H1 (cell line): ENCODE measurements at regions of chr20 and their contacts with region 1.

Region 1: GRCh38 chr20:645318-646106 is 7.5 kb downstream of the SRXN1 start:
- DNase-seq: peak; percentile 82 to 96
- H3K4me3 ChIP-seq: no peak overlapping the region
- H3K27ac ChIP-seq: no peak overlapping the region
- H3K4me1 ChIP-seq: peaks cover 0 to 4% (median 1%) of the 10 kb centered on the region in 4 experiments; a peak in 2 of 7 replicates
- H3K27me3 ChIP-seq: no peaks in the 10 kb centered on the region
- CTCF ChIP-seq: peak; percentile 87 to 96 (median 96)
- EP300 ChIP-seq: peak in 1 of 2 experiments; percentile 50; a peak in 1 of 3 replicates
- POLR2A ChIP-seq: no peak
- RAD21 ChIP-seq: peak; percentile 94 to 95

Region 2: GRCh38 chr20:391041-391711 is 254.3 kb before region 1 on chr20:
- CTCF ChIA-PET with region 1: no interaction called
- POLR2A ChIA-PET with region 1: no interaction called
- DNase-seq: no peak
- H3K4me3 ChIP-seq: no peak overlapping the region
- H3K27ac ChIP-seq: no peak overlapping the region
- H3K4me1 ChIP-seq: no peaks in the 10 kb centered on the region
- H3K27me3 ChIP-seq: no peaks in the 10 kb centered on the region
- CTCF ChIP-seq: no peak
- EP300 ChIP-seq: no peak
- POLR2A ChIP-seq: no peak
- RAD21 ChIP-seq: no peak

Region 3: DNA sequence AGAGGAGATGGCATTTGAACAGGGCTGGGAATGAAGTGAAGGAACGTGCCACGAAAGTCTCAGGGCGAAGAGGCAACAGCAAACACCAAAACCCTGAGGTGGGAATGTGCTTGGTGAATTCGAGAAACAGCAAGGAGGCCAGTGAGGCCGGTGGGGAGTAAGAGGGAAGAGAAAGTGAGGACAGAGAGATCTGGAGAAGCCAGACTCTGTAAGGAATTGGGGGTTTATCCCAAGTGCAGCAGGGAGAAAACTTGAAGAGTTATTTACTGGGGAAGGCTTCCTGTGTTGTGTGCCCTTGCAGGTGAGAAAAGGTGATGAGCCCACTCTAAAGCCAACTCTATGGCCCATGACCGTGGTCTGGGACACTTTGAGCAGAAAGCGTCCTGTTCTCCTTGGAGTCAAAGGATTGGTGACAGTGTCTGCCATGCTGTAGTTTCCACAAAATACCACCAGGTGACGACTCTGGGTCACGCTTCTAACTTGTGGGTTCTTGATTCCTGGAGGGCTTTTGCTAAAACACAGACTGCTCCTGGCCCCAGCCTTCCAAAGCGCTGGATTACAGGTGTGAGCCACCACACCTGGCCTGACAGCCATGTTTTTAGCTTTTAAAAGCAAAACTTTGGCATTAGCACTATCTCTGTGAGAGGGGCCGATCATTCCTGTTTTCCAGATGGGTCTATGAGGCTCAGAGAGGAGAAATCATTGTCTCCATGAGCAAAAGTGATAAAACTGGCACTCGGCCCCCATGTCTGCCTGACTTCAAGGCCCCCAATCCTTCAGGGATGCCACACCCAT is 83.9 kb before region 1 on chr20:
- CTCF ChIA-PET with region 1: interaction called, 142 read pairs
- POLR2A ChIA-PET with region 1: interaction called, 7 read pairs
- DNase-seq: peak in 1 of 2 experiments; percentile 83
- H3K4me3 ChIP-seq: no peak overlapping the region
- H3K27ac ChIP-seq: no peak overlapping the region
- H3K4me1 ChIP-seq: no peaks in the 10 kb centered on the region
- H3K27me3 ChIP-seq: no peaks in the 10 kb centered on the region
- CTCF ChIP-seq: peak; percentile 74 to 99 (median 95)
- EP300 ChIP-seq: no peak
- POLR2A ChIP-seq: no peak
- RAD21 ChIP-seq: peak; percentile 98

Region 4: GRCh38 chr20:577167-577791 is 68.2 kb before region 1 on chr20:
- CTCF ChIA-PET with region 1: interaction called, 40 read pairs
- POLR2A ChIA-PET with region 1: interaction called, 3 read pairs
- DNase-seq: no peak
- H3K4me3 ChIP-seq: no peak overlapping the region
- H3K27ac ChIP-seq: no peak overlapping the region
- H3K4me1 ChIP-seq: peaks cover 8 to 28% (median 14%) of the 10 kb centered on the region in 4 experiments
- H3K27me3 ChIP-seq: peaks cover 0 to 11% (median 3%) of the 10 kb centered on the region in 4 experiments; a peak in 5 of 7 replicates
- CTCF ChIP-seq: peak; percentile 33 to 74 (median 40); a peak in 3 of 4 replicates
- EP300 ChIP-seq: no peak
- POLR2A ChIP-seq: no peak
- RAD21 ChIP-seq: peak in 1 of 2 experiments; percentile 41; a peak in 1 of 4 replicates

Region 5: DNA sequence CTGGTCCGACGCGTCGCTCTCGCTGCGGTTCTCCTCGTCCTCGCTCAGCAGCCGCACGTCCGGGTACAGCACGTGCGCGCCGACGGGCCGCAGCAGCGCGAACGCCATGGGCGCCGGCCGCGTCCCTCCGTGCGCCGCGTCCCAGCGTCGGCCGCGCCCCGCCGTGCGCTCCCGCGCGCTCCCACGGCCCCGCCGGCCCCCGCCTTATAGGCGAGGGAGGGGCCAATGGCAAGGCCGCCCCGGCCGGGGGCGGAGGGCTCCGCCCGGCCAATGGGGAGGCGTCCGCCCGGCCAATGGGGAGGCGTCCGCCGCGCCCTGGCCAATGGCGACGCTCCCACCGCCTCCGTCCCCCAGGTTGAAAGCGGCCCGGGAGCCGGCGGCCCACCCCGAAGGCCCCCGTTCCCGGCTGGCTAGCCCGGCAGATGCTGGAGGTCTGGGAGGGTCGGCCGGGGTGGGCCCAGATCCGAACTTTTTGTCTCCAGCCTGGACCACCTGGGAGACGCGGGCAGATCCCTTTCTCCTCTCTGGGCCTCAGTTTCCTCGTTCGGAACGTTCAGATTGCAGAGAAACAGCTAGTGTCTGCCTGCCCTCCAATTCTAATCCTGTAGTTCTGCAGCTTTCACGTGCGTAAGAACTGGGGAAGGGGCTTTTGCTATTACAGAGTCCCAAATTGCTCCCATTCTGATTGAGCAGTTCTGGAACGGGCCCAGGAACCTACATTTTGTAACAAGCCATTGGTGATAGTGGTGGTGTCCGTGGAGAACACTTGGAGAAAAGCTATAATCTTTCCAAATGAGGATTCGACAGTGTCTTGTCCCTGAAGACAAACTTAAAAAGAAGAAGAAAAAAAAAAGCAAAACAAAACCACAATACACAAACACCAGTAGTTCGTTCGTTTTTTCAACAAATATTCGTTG is 35.1 kb before region 1 on chr20 and contains the start of gene TCF15:
- CTCF ChIA-PET with region 1: interaction called, 14 read pairs
- POLR2A ChIA-PET with region 1: interaction called, 4 read pairs
- DNase-seq: peak in 1 of 2 experiments; percentile 81
- H3K4me3 ChIP-seq: peak within 1 kb of the TSS; percentile 31 to 68 (median 41)
- H3K27ac ChIP-seq: no peak within 1 kb of the TSS
- H3K4me1 ChIP-seq: peaks cover 0 to 19% (median 13%) of the 10 kb centered on the region in 4 experiments; a peak in 6 of 7 replicates
- H3K27me3 ChIP-seq: peaks cover 7 to 28% (median 26%) of the 10 kb centered on the region in 4 experiments
- CTCF ChIP-seq: no peak
- EP300 ChIP-seq: no peak
- POLR2A ChIP-seq: peak in 1 of 2 experiments; percentile 16; a peak in 1 of 3 replicates
- RAD21 ChIP-seq: no peak
- total RNA-seq, gene TCF15: 6.9 and 7.3 TPM in 2 replicates

Region 6: GRCh38 chr20:634556-634955 is 11.0 kb before region 1 on chr20:
- CTCF ChIA-PET with region 1: interaction called, 13 read pairs
- POLR2A ChIA-PET with region 1: no interaction called
- DNase-seq: no peak
- H3K4me3 ChIP-seq: no peak overlapping the region
- H3K27ac ChIP-seq: no peak overlapping the region
- H3K4me1 ChIP-seq: peaks cover 0 to 2% (median 0%) of the 10 kb centered on the region in 4 experiments; a peak in 1 of 7 replicates
- H3K27me3 ChIP-seq: no peaks in the 10 kb centered on the region; a peak in 1 of 7 replicates
- CTCF ChIP-seq: no peak
- EP300 ChIP-seq: no peak
- POLR2A ChIP-seq: no peak
- RAD21 ChIP-seq: no peak

Region 7: GRCh38 chr20:805713-806112 is 160.2 kb after region 1 on chr20:
- CTCF ChIA-PET with region 1: no interaction called
- POLR2A ChIA-PET with region 1: no interaction called
- DNase-seq: no peak
- H3K4me3 ChIP-seq: no peak overlapping the region
- H3K27ac ChIP-seq: no peak overlapping the region
- H3K4me1 ChIP-seq: no peaks in the 10 kb centered on the region
- H3K27me3 ChIP-seq: no peaks in the 10 kb centered on the region
- CTCF ChIP-seq: no peak
- EP300 ChIP-seq: no peak
- POLR2A ChIP-seq: no peak
- RAD21 ChIP-seq: no peak